ENCODE measurements at regions of chr5 and their contacts with region 1.

Region 1: GRCh38 chr5:58498340-58498942 is 7.2 kb downstream of the GAPT start:
- DNase-seq: peak in 2 of 3 donors; percentile 33 to 58
- ATAC-seq: peak in 1 of 2 donors; percentile 52
- H3K4me3 ChIP-seq: no peak overlapping the region
- H3K27ac ChIP-seq: no peak overlapping the region
- H3K4me1 ChIP-seq: no peaks in the 10 kb centered on the region
- H3K27me3 ChIP-seq: no peaks in the 10 kb centered on the region

Region 2: DNA sequence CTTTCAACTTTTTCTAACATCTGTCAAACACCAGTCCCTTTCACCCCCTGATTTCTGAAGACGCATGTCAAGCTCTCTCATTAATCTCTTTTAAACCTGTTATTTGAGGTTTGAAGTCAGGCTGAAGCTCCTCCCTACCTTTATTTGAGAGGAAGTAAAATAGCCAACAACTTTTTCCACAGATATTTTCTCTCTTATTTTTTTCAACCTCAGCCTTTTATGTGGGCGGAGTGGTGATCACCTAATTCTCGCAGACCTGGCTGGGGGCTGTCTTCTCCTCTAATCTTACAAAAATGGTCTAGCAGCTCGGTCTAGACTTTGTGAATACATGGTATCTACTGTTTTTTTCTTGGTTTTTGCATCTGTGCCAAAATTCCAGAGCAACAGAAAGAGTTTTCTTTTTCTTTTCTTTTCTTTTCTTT is 620.1 kb before region 1 on chr5:
- intact Hi-C with region 1: no loop called
- DNase-seq: no peak
- ATAC-seq: no peak
- H3K4me3 ChIP-seq: no peak overlapping the region
- H3K27ac ChIP-seq: no peak overlapping the region
- H3K4me1 ChIP-seq: no peaks in the 10 kb centered on the region
- H3K27me3 ChIP-seq: no peaks in the 10 kb centered on the region

Region 3: DNA sequence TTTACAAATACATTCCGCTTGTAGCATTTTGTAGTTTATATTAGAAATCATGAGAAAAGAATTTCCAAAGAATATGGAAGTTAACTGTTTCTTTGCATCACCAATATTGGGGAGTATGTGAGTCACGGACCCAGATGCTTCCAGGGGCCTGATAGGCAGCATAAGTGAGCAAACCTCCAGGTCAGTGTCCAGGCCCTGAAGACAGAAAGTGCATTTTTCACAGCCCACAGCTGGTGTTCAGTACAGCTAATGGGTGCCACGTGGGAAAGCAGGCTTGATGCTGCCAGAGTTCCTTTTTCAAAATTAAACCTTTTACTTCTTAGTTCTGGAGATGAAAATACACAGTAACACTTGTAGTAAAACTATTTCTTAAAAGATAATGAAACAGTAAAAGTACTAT is 561.4 kb before region 1 on chr5:
- intact Hi-C with region 1: no loop called
- DNase-seq: no peak
- ATAC-seq: no peak
- H3K4me3 ChIP-seq: no peak overlapping the region
- H3K27ac ChIP-seq: no peak overlapping the region
- H3K4me1 ChIP-seq: peaks cover 2% of the 10 kb centered on the region
- H3K27me3 ChIP-seq: no peaks in the 10 kb centered on the region

Region 4: DNA sequence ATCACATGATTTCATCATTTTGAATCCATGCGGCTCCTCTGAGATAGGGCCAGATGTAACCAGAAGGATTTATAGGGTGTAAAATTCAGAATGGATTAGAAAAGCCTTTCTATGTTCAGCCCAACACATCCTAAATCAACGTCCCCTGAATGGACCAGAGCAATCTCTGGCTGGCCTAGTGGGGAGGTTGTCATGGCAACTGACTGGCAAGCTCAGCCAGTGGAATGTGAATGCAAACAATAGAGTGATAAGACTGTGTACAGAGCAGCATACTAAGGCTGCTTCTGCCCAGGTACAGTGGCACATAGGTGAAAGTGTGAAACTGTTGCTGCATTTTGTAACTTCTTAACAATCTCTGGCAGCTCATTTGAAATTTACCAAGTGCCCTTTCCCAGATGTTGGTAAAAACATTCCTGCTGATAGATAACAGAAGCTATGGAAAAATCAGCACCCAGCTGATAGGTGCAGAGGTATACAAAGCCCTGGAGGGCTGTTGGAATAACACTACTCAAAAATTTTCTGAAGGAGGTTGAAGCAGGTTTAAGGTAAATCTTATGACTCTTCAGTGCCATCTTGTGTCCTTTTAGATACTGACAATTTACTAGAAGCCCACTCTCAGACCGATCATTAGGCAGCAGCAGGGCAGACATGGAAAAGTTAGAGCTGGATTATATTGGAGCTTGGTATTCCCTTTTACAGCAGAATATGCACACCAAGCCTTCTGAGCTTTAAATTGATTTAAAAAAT is 351.7 kb after region 1 on chr5:
- intact Hi-C with region 1: loop called (anchors 2 to 10 kb)
- DNase-seq: no peak
- ATAC-seq: peak; percentile 47 to 64
- H3K4me3 ChIP-seq: no peak overlapping the region
- H3K27ac ChIP-seq: no peak overlapping the region
- H3K4me1 ChIP-seq: no peaks in the 10 kb centered on the region
- H3K27me3 ChIP-seq: no peaks in the 10 kb centered on the region

Region 5: GRCh38 chr5:59086024-59086423 is 587.6 kb after region 1 on chr5:
- intact Hi-C with region 1: no loop called
- DNase-seq: no peak
- ATAC-seq: no peak
- H3K4me3 ChIP-seq: no peak overlapping the region
- H3K27ac ChIP-seq: no peak overlapping the region
- H3K4me1 ChIP-seq: no peaks in the 10 kb centered on the region
- H3K27me3 ChIP-seq: no peaks in the 10 kb centered on the region

Measured in right cardiac atrium (tissue), 5 donors.